ENCODE measurements at regions of chr11 and their contacts with region 1.

Region 1: DNA sequence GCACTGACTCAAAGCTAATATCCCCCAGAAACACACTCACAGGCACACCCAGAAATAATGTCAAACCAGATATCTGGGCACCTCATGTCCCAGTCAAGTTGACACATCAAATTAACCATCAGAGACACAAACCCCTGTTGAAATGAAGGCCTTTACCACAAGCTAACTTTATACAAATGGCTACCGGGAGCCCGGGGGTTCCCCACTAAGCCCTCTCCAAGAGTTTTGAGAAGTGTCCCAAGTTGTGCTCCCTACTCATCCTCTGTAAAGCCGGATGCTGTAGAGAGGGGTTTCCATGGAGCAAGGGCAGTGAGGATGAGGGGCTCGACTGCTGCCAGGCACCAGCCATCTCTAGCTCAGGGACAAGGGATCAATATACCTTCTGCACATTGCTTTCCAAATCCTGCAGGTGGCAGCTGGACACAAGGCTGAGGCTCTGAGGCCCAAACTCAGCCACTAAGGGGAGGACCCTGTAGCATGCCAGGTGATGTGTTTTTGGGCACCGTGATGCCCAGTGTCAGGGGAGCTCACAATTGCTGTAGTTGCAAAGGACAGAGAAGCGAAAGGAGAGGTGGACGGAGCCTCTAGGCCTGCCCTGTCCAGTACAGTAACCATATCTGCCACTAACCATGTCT is 145.7 kb downstream of the TTC17 start:
- DNase-seq: peak; percentile 23
- ATAC-seq: no peak
- H3K4me3 Mint-ChIP-seq: no peak overlapping the region
- H3K27ac Mint-ChIP-seq: no peak overlapping the region
- H3K4me1 Mint-ChIP-seq: peaks cover 8% of the 10 kb centered on the region
- H3K27me3 Mint-ChIP-seq: peaks cover 6% of the 10 kb centered on the region

Region 2: DNA sequence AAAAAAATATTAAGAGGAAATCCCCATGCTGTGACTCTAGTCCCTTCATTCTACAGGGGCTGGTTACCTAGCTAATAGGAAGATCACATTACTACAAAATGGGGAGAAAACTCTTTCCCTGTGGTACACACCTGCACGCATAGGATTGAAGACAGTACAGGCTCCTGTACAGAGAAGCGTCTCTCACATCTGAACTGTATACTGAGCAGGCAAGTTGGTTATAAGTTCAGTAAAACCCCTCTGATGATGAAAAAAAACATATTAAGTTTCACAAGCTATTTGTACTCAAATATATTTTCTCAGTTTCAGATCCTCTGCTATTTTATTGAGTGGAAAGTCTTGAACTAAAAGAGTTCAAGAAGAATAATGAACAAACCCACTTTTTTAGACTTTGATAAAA is 19.2 kb after region 1 on chr11:
- CTCF ChIA-PET with region 1: no interaction called
- POLR2A ChIA-PET with region 1: no interaction called
- intact Hi-C with region 1: no loop called
- DNase-seq: no peak
- ATAC-seq: no peak
- H3K4me3 Mint-ChIP-seq: no peak overlapping the region
- H3K27ac Mint-ChIP-seq: no peak overlapping the region
- H3K4me1 Mint-ChIP-seq: no peaks in the 10 kb centered on the region
- H3K27me3 Mint-ChIP-seq: peaks cover 6% of the 10 kb centered on the region

Region 3: GRCh38 chr11:43567396-43567975 is 63.1 kb after region 1 on chr11:
- CTCF ChIA-PET with region 1: interaction called, 9 read pairs
- POLR2A ChIA-PET with region 1: no interaction called
- intact Hi-C with region 1: loop called (anchors 2 kb)
- DNase-seq: no peak
- ATAC-seq: peak; percentile 63
- H3K4me3 Mint-ChIP-seq: no peak overlapping the region
- H3K27ac Mint-ChIP-seq: no peak overlapping the region
- H3K4me1 Mint-ChIP-seq: no peaks in the 10 kb centered on the region
- H3K27me3 Mint-ChIP-seq: peaks cover 41% of the 10 kb centered on the region

Region 4: DNA sequence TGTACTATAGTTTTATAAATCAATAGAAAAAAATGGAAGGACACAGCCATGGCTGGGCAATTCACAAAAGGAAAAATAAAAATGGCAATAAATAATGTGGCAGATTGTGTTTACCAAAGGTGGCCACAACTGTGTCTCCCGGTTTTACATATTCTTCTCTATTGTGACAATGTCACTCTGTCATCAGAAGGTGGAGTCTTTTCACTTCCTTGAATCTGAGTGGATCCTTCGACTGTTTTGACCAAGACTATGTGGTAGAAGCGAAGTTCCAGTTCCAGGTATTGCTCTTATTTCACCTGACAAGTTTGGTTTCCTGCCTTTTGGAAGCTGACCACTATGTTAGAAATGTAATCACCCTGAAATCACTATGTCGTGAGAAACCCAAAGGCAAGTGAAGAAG is 145.1 kb after region 1 on chr11:
- CTCF ChIA-PET with region 1: no interaction called
- POLR2A ChIA-PET with region 1: no interaction called
- intact Hi-C with region 1: no loop called
- DNase-seq: no peak
- ATAC-seq: no peak
- H3K4me3 Mint-ChIP-seq: no peak overlapping the region
- H3K27ac Mint-ChIP-seq: no peak overlapping the region
- H3K4me1 Mint-ChIP-seq: peaks cover 15% of the 10 kb centered on the region
- H3K27me3 Mint-ChIP-seq: peaks cover 2% of the 10 kb centered on the region